ENCODE measurements at regions of chr18 and their contacts with region 1.

Region 1: GRCh38 chr18:12947355-12948041 is at the start of gene SEH1L:
- DNase-seq: peak; percentile 95 to 100 (median 99)

Region 2: GRCh38 chr18:12376718-12377555 is 570.6 kb before region 1 on chr18 and contains the start of gene AFG3L2:
- intact Hi-C with region 1: loop called (anchors 5 kb)
- DNase-seq: peak; percentile 98 to 100 (median 100)

Region 3: GRCh38 chr18:12883684-12884405 is 63.7 kb before region 1 on chr18 and contains the start of gene PTPN2:
- intact Hi-C with region 1: loop called (anchors 5 kb)
- DNase-seq: peak; percentile 85 to 97 (median 93)

Region 4: GRCh38 chr18:12890506-12890905 is 57.0 kb before region 1 on chr18:
- intact Hi-C with region 1: loop called (anchors 5 kb)
- DNase-seq: no peak

Region 5: GRCh38 chr18:12990967-12991838 is 43.7 kb after region 1 on chr18 and contains the start of gene CEP192:
- intact Hi-C with region 1: loop called (anchors 2 kb)
- DNase-seq: peak; percentile 95 to 99 (median 98)